Mammary epithelial cell (primary cell): ENCODE measurements at regions of chr12 and their contacts with region 1.

Region 1: DNA sequence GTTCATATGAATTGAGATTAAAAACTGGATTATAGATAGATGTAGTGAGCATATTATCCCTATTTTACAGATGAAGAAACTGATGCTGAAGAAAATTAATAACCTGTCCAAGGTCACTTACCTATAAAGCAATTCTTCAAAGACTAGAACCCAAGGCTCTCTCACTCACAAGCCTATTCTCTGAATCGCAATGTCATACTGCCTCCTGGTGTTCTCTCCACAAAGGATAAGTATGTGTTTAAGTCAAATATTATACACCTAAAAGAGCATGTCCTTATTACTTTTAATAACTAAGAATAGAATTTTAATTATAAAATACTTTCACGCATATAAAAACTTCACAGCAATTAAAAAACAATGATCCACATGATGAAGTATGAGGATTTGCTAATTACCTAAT is 721.3 kb upstream of the USP15 start:
- DNase-seq: peak; percentile 10
- H3K4me3 ChIP-seq: no peak overlapping the region
- H3K27ac ChIP-seq: no peak overlapping the region
- H3K4me1 ChIP-seq: no peaks in the 10 kb centered on the region
- H3K27me3 ChIP-seq: no peaks in the 10 kb centered on the region
- CTCF ChIP-seq: peak; percentile 35 to 54

Region 2: DNA sequence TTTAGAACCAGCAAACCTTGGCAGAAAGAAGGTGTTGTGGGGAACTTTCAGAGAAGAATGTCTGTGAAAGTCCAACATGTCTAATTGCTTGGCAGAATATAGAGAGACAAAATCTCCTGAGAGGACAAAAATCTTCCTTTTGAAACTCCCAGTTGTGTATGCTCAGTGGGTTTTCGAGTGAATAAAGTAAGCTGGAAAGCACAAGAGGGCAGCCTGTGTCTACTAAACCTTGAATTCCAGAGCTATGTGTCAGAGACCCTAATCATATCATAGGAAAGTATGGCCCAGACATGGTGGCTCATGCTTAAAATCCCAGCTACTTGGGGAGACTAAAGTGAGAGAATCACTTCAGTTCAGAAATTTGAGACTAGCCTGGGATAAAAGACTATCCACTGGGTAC is 1281.9 kb before region 1 on chr12:
- CTCF ChIA-PET with region 1: no interaction called
- dilution Hi-C with region 1: no loop called
- in situ Hi-C with region 1: no loop called
- intact Hi-C with region 1: loop called (anchors 5 kb)
- DNase-seq: peak; percentile 43
- H3K4me3 ChIP-seq: no peak overlapping the region
- H3K27ac ChIP-seq: no peak overlapping the region
- H3K4me1 ChIP-seq: no peaks in the 10 kb centered on the region
- H3K27me3 ChIP-seq: no peaks in the 10 kb centered on the region
- CTCF ChIP-seq: peak; percentile 21 to 30

Region 3: GRCh38 chr12:60501124-60501729 is 1037.7 kb before region 1 on chr12:
- CTCF ChIA-PET with region 1: no interaction called
- dilution Hi-C with region 1: no loop called
- in situ Hi-C with region 1: no loop called
- intact Hi-C with region 1: loop called (anchors 5 kb)
- DNase-seq: peak; percentile 1
- H3K4me3 ChIP-seq: no peak overlapping the region
- H3K27ac ChIP-seq: no peak overlapping the region
- H3K4me1 ChIP-seq: no peaks in the 10 kb centered on the region
- H3K27me3 ChIP-seq: no peaks in the 10 kb centered on the region
- CTCF ChIP-seq: peak in 1 of 2 donors; percentile 11

Region 4: GRCh38 chr12:60805364-60805763 is 733.6 kb before region 1 on chr12:
- CTCF ChIA-PET with region 1: no interaction called
- dilution Hi-C with region 1: no loop called
- in situ Hi-C with region 1: no loop called
- intact Hi-C with region 1: loop called (anchors 10 kb)
- DNase-seq: no peak
- H3K4me3 ChIP-seq: no peak overlapping the region
- H3K27ac ChIP-seq: no peak overlapping the region
- H3K4me1 ChIP-seq: no peaks in the 10 kb centered on the region
- H3K27me3 ChIP-seq: no peaks in the 10 kb centered on the region
- CTCF ChIP-seq: peak in 1 of 2 donors; percentile 36

Region 5: DNA sequence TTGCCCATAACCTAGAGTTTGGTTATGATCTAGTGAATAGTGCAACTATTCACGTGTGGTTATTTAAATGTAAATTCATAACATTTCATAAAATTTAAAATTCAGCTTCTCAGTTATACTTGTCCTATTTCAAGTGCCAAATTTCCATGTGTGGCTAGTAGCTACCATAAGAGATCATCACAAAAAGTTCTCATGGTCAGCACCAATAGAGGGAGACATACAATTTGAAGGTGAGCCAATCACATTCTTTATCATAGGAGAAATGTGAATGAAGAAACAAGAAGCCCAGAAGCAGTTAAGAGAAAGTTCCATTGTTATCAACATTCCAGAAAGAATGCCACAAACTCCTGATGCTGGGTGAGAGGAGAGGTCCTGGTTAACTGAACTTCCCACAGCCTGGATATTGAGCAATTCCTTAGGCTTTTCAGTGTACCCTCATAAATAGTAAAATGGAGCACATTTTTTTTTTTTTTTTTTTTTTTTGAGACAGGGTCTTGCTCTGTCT is 171.6 kb before region 1 on chr12:
- CTCF ChIA-PET with region 1: no interaction called
- dilution Hi-C with region 1: no loop called
- in situ Hi-C with region 1: no loop called
- intact Hi-C with region 1: loop called (anchors 10 kb)
- DNase-seq: no peak
- H3K4me3 ChIP-seq: no peak overlapping the region
- H3K27ac ChIP-seq: no peak overlapping the region
- H3K4me1 ChIP-seq: no peaks in the 10 kb centered on the region
- H3K27me3 ChIP-seq: no peaks in the 10 kb centered on the region
- CTCF ChIP-seq: peak in 1 of 2 donors; percentile 40

Region 6: GRCh38 chr12:61490526-61491498 is 48.1 kb before region 1 on chr12:
- CTCF ChIA-PET with region 1: no interaction called
- dilution Hi-C with region 1: no loop called
- in situ Hi-C with region 1: no loop called
- intact Hi-C with region 1: no loop called
- DNase-seq: peak; percentile 88
- H3K4me3 ChIP-seq: no peak overlapping the region
- H3K27ac ChIP-seq: no peak overlapping the region
- H3K4me1 ChIP-seq: peaks cover 7% of the 10 kb centered on the region
- H3K27me3 ChIP-seq: no peaks in the 10 kb centered on the region
- CTCF ChIP-seq: no peak